ENCODE measurements at regions of chr20 and their contacts with region 1.

Region 1: GRCh38 chr20:3854462-3854871 is 7.8 kb downstream of the MAVS start:
- DNase-seq: peak in 1 of 2 experiments; percentile 39
- ATAC-seq: peak; percentile 68 to 80; a peak in 5 of 6 replicates
- H3K4me3 ChIP-seq: no peak overlapping the region
- H3K27ac ChIP-seq: peak overlapping the region in 1 of 2 experiments; percentile 14; a peak in 1 of 6 replicates
- H3K4me1 ChIP-seq: 0 out of 3 replicates have a peak, but pooled peaks cover 5% of the 10 kb centered on the region
- CTCF ChIP-seq: no peak
- EP300 ChIP-seq: no peak
- POLR2A ChIP-seq: no peak
- RAD21 ChIP-seq: no peak

Region 2: GRCh38 chr20:3716195-3716834 is 138.2 kb before region 1 on chr20:
- CTCF ChIA-PET with region 1: interaction called, 11 read pairs
- POLR2A ChIA-PET with region 1: no interaction called
- DNase-seq: peak; percentile 73 to 74
- ATAC-seq: peak; percentile 89 to 97
- H3K4me3 ChIP-seq: no peak overlapping the region
- H3K27ac ChIP-seq: no peak overlapping the region
- H3K4me1 ChIP-seq: no peaks in the 10 kb centered on the region
- CTCF ChIP-seq: peak; percentile 68
- EP300 ChIP-seq: no peak
- POLR2A ChIP-seq: no peak
- RAD21 ChIP-seq: peak; percentile 77 to 92

Region 3: GRCh38 chr20:3781153-3781910 is 73.1 kb before region 1 on chr20 and contains the start of gene SPEF1:
- CTCF ChIA-PET with region 1: interaction called, 97 read pairs
- POLR2A ChIA-PET with region 1: interaction called, 5 read pairs
- DNase-seq: peak; percentile 97 to 100
- ATAC-seq: peak; percentile 67 to 83
- H3K4me3 ChIP-seq: peak within 1 kb of the TSS; percentile 47
- H3K27ac ChIP-seq: peak within 1 kb of the TSS in 1 of 2 experiments; percentile 23; a peak in 1 of 6 replicates
- H3K4me1 ChIP-seq: peaks cover 28% of the 10 kb centered on the region
- CTCF ChIP-seq: peak; percentile 86
- EP300 ChIP-seq: no peak
- POLR2A ChIP-seq: no peak; the same call in 1 of the 2 replicates
- RAD21 ChIP-seq: peak; percentile 66 to 70
- polyA plus RNA-seq, gene SPEF1: 0.41 and 0.46 TPM in 2 replicates

Region 4: DNA sequence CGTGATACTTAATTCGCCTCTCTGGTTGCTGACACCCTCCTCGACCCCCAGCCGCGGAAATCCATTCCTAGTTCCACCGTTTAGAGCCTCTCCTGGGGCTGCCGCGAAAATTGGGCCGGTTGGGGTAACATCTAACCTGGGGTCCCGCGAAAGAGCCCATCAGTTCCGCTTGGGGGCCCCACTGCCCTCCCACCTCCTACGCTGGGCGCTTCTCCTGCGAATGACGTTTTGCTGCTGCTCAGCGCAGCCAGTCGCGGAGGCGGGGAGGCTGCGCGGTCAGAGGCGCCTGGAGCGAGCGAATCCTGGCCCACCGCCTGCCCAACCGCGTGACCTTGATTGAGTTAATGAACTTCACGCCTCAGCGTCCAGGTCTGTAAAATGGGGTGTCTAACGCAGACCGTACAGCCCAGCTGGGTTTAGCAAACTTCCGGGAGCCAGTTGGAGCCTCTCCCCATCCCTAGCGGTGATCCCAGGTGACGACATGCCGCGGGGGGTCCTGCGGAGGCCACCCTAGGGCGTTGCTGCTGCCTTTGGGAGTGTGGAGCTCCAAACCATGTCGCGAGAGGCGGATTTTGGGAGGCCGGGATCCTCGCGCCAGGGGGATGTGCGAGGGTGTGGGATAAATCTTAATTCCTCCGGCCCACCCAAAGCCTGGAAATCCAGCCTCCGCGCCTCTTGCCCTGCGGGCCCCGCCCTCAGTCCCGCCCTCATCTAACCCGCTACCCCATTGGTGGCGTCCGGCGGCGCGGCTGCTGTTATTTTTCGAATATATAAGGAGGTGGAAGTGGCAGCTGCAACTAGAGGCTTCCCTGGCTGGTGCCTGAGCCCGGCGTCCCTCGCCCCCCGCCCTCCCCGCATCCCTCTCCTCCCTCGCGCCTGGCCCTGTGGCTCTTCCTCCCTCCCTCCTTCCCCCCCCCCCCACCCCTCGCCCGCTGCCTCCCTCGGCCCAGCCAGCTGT is 58.7 kb before region 1 on chr20 and contains the start of gene CDC25B:
- CTCF ChIA-PET with region 1: interaction called, 97 read pairs
- POLR2A ChIA-PET with region 1: interaction called, 3 read pairs
- DNase-seq: peak; percentile 96 to 97
- ATAC-seq: peak; percentile 88 to 91
- H3K4me3 ChIP-seq: peak within 1 kb of the TSS; percentile 84
- H3K27ac ChIP-seq: peak within 1 kb of the TSS; percentile 98 to 99
- H3K4me1 ChIP-seq: peaks cover 36% of the 10 kb centered on the region
- CTCF ChIP-seq: peak; percentile 37; the same call in 2 of the 3 replicates
- EP300 ChIP-seq: no peak
- POLR2A ChIP-seq: peak; percentile 89
- RAD21 ChIP-seq: peak; percentile 38 to 51; a peak in 4 of 5 replicates
- polyA plus RNA-seq, gene CDC25B: 133 and 136 TPM in 2 replicates

Region 5: GRCh38 chr20:3820048-3820900 is 34.2 kb before region 1 on chr20 and contains the start of gene AP5S1:
- CTCF ChIA-PET with region 1: interaction called, 132 read pairs
- POLR2A ChIA-PET with region 1: interaction called, 4 read pairs
- DNase-seq: peak; percentile 88 to 99
- ATAC-seq: peak; percentile 77 to 82
- H3K4me3 ChIP-seq: peak within 1 kb of the TSS; percentile 63
- H3K27ac ChIP-seq: peak within 1 kb of the TSS; percentile 91 to 92
- H3K4me1 ChIP-seq: peaks cover 28% of the 10 kb centered on the region
- CTCF ChIP-seq: peak; percentile 100
- EP300 ChIP-seq: no peak
- POLR2A ChIP-seq: peak; percentile 88
- RAD21 ChIP-seq: peak; percentile 75 to 98
- polyA plus RNA-seq, gene AP5S1: 10.2 and 11.8 TPM in 2 replicates

Region 6: GRCh38 chr20:3839169-3839727 is 15.2 kb before region 1 on chr20:
- CTCF ChIA-PET with region 1: interaction called, 41 read pairs
- POLR2A ChIA-PET with region 1: interaction called, 3 read pairs
- DNase-seq: no peak
- ATAC-seq: no peak
- H3K4me3 ChIP-seq: no peak overlapping the region
- H3K27ac ChIP-seq: no peak overlapping the region
- H3K4me1 ChIP-seq: peaks cover 16% of the 10 kb centered on the region
- CTCF ChIP-seq: no peak
- EP300 ChIP-seq: no peak
- POLR2A ChIP-seq: no peak
- RAD21 ChIP-seq: no peak

Region 7: DNA sequence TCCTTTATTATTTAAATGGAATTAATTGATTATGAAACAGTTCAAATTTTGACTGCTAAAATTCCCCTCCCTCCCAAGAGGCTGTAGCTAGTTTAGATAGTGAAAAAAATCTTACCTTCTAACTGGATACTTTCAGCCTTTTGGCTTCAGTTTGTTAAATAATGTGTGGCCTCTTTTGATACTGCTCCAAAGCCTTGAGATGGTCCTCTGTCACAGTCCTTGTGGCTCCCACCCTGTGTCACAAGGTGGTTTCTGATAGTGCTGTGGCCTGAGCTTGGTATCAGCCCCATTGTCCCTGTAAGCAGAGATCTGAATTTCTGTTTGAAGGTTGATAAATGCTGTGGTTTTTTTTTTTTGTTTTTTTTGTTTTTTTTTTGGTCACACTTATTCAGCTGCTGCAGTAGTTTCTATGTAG is 55.5 kb after region 1 on chr20:
- CTCF ChIA-PET with region 1: interaction called, 13 read pairs
- POLR2A ChIA-PET with region 1: no interaction called
- DNase-seq: no peak
- ATAC-seq: no peak
- H3K4me3 ChIP-seq: no peak overlapping the region
- H3K27ac ChIP-seq: no peak overlapping the region
- H3K4me1 ChIP-seq: peaks cover 22% of the 10 kb centered on the region
- CTCF ChIP-seq: no peak
- EP300 ChIP-seq: no peak
- POLR2A ChIP-seq: no peak
- RAD21 ChIP-seq: no peak

Region 8: DNA sequence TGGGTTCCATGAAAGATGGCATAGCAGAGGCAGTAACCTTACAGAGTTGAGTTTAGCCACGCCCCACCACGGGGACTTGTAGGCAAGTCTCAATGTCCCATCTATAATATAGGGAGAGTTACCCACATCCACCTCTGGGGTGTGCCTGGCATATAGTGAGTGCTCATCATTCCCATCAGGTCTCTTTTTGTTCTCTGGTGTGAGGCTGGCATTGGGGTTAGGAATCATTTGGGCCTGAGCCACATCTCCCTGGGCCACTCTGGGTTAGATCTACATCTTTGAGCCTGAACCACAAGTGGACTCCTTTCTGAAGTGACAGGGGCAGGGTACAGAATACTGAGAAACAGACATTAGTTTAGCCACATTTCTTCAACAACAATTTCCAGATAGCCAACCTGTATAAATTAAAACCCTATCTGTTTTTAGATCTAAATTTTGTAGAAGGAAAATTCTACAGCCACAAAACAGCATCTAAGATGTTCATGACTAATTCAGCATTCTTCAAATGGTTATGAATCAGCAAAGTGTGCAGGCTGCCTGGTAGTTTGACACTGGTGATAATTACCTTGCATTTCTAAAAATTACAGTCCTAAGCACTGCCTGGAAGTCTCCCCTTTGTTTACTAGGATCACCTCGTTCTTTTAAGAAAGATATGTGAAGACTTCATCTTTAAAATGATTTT is 140.7 kb after region 1 on chr20:
- CTCF ChIA-PET with region 1: no interaction called
- POLR2A ChIA-PET with region 1: no interaction called
- DNase-seq: no peak
- ATAC-seq: peak; percentile 86 to 87
- H3K4me3 ChIP-seq: no peak overlapping the region
- H3K27ac ChIP-seq: peak overlapping the region in 1 of 2 experiments; percentile 43; a peak in 3 of 6 replicates
- H3K4me1 ChIP-seq: peaks cover 13% of the 10 kb centered on the region
- CTCF ChIP-seq: no peak
- EP300 ChIP-seq: no peak
- POLR2A ChIP-seq: no peak
- RAD21 ChIP-seq: no peak

Measured in A549 (cell line).